Activated CD4-positive, alpha-beta memory T cell treated with anti-CD3 and anti-CD28 coated beads for 36 hours (primary cell): ENCODE measurements at regions of chr3 and their contacts with region 1.

Region 1: DNA sequence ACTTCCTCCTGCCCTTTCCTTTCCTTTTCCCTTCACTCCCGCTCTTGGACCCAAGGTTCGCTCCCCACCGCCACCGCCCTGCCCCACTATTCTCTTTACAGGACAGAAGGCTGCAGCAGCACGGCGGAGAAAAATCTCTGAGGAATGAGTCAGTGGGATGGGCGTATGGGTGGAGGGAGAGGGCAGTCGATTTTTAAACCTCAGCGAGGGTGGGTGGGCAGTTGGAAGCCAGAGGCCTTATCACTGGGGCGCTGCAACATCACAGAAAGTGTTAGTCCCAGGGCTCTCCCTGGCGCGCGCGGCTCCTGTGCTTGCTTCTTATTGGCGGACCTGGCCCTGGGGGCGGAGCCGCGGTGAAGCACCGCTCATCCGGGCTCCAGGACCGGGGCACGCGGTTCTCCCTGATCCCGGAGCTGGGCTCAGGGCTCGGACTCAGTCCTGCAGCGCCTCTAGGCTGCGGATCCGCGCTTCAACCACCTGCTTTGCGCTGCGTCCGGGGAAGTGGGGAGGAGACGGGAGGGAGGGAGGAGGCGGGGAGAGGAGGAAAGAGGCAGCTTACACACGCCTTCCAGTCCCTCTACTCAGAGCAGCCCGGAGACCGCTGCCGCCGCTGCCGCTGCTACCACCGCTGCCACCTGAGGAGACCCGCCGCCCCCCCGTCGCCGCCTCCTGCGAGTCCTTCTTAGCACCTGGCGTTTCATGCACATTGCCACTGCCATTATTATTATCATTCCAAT is at the start of gene ALCAM:
- DNase-seq: peak; percentile 91
- H3K4me3 Mint-ChIP-seq: peak within 1 kb of the TSS; percentile 84
- H3K27ac Mint-ChIP-seq: peak within 1 kb of the TSS; percentile 97
- H3K4me1 Mint-ChIP-seq: peaks cover 28% of the 10 kb centered on the region
- H3K27me3 Mint-ChIP-seq: peaks cover 24% of the 10 kb centered on the region
- total RNA-seq, gene ALCAM: 20.3 to 20.6 TPM

Region 2: DNA sequence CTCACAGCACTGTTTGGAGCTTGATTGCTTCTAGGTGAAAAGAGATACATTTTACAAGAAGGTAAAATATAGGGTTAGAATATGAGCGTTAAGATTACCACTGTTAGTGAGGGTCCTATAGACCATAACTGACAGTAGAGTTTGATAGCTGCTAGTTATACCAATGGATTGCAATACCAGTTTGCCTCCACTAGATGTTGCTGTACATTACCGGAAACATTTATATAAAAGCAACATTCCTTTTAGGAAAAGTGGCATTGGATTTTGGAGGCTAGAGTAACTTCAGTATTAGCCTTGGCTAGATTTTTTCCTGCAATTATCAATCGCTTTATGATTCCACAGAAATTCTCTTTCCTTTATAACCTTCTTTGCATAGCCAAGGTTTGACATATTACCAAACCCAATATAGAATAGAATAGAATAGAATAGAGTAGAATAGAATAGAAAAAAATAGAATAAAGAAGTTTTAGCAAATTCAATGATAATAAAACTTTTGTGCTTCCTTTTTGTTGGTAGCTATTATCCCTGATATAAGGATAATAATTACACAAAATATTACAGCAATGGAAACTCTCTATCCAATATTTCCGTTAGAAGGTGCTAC is 1093.3 kb before region 1 on chr3:
- CTCF ChIA-PET with region 1: no interaction called
- POLR2A ChIA-PET with region 1: no interaction called
- intact Hi-C with region 1: loop called (anchors 10 kb)
- DNase-seq: no peak
- H3K4me3 Mint-ChIP-seq: no peak overlapping the region
- H3K27ac Mint-ChIP-seq: no peak overlapping the region
- H3K4me1 Mint-ChIP-seq: no peaks in the 10 kb centered on the region
- H3K27me3 Mint-ChIP-seq: no peaks in the 10 kb centered on the region

Region 3: DNA sequence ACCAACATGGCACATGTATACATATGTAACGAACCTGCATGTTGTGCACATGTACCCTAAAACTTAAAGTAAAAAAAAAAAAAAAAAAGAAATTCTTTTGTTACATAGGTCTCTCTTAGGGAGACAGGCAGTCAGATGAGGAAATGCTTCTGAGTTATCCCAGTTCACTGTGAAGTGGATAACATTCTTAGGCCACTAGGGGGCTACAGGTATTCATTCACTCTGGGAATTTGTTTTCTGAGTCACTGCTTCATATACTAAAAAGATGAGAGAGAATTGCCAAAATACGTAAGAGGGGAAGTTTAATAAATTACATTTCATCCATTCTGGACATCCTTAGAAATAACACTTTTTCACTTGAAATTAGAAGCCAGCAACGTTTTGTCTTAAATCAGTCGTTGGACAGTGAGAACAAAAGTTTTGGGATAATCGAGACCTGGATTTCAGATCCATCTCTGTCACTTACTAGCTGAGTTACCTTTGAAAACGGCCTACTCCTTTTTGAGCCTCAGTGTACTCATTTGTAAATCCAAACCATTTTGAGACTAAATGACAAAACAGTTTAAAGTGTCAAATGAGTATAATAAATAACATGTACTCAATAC is 738.2 kb before region 1 on chr3:
- CTCF ChIA-PET with region 1: no interaction called
- POLR2A ChIA-PET with region 1: no interaction called
- intact Hi-C with region 1: loop called (anchors 1 kb)
- DNase-seq: no peak
- H3K4me3 Mint-ChIP-seq: no peak overlapping the region
- H3K27ac Mint-ChIP-seq: no peak overlapping the region
- H3K4me1 Mint-ChIP-seq: no peaks in the 10 kb centered on the region
- H3K27me3 Mint-ChIP-seq: no peaks in the 10 kb centered on the region

Region 4: DNA sequence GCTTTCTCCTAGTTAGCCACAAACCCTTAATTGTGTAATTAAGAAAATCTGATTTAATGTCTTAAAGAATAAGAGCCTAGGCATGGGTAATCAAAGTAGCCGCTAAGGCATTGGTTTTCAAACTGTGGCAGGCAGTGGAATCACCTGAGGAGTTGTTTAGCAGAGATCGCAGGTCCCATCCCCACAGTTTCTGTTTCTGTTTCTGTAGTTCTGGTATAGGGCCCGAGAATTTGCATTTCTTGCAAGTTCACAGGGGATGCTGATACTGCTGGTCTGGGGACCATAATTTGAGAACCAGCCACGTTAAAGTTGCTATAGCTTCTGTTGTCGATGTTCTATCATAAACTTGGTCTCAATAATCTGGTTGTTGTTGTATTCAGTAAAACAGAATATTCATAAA is 204.5 kb after region 1 on chr3:
- CTCF ChIA-PET with region 1: no interaction called
- POLR2A ChIA-PET with region 1: no interaction called
- intact Hi-C with region 1: no loop called
- DNase-seq: no peak
- H3K4me3 Mint-ChIP-seq: no peak overlapping the region
- H3K27ac Mint-ChIP-seq: no peak overlapping the region
- H3K4me1 Mint-ChIP-seq: no peaks in the 10 kb centered on the region
- H3K27me3 Mint-ChIP-seq: no peaks in the 10 kb centered on the region

Region 5: GRCh38 chr3:105752744-105753415 is 386.4 kb after region 1 on chr3:
- CTCF ChIA-PET with region 1: no interaction called
- POLR2A ChIA-PET with region 1: no interaction called
- intact Hi-C with region 1: loop called (anchors 1 kb)
- DNase-seq: peak; percentile 41
- H3K4me3 Mint-ChIP-seq: peak overlapping the region; percentile 21
- H3K27ac Mint-ChIP-seq: peak overlapping the region; percentile 87
- H3K4me1 Mint-ChIP-seq: peaks cover 75% of the 10 kb centered on the region
- H3K27me3 Mint-ChIP-seq: no peaks in the 10 kb centered on the region

Region 6: DNA sequence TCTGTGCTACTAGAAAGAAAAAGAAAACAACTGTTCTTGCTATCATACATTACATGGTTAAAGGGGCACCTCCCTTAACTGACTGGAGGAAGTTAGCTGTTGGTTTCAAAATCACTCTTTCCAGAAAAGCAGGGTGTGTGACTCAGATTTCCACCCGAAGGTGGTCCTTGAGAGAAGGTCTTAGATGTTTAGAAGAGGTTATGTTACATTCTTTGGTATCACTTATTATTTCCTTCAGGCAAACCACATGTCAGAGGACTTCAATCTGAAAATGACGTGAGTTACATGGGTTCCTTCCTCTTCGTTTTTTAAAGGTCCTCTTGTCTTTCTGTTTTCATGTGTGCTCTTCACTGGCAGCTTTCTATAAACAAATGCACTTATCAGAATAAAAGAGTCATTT is 810.2 kb after region 1 on chr3:
- CTCF ChIA-PET with region 1: no interaction called
- POLR2A ChIA-PET with region 1: no interaction called
- intact Hi-C with region 1: loop called (anchors 2 kb)
- DNase-seq: peak; percentile 76
- H3K4me3 Mint-ChIP-seq: peak overlapping the region; percentile 51
- H3K27ac Mint-ChIP-seq: peak overlapping the region; percentile 87
- H3K4me1 Mint-ChIP-seq: peaks cover 58% of the 10 kb centered on the region
- H3K27me3 Mint-ChIP-seq: no peaks in the 10 kb centered on the region

Region 7: GRCh38 chr3:106333911-106334618 is 967.6 kb after region 1 on chr3:
- CTCF ChIA-PET with region 1: no interaction called
- POLR2A ChIA-PET with region 1: no interaction called
- intact Hi-C with region 1: loop called (anchors 1 kb)
- DNase-seq: peak; percentile 81
- H3K4me3 Mint-ChIP-seq: peak overlapping the region; percentile 49
- H3K27ac Mint-ChIP-seq: peak overlapping the region; percentile 87
- H3K4me1 Mint-ChIP-seq: peaks cover 80% of the 10 kb centered on the region
- H3K27me3 Mint-ChIP-seq: no peaks in the 10 kb centered on the region

Region 8: DNA sequence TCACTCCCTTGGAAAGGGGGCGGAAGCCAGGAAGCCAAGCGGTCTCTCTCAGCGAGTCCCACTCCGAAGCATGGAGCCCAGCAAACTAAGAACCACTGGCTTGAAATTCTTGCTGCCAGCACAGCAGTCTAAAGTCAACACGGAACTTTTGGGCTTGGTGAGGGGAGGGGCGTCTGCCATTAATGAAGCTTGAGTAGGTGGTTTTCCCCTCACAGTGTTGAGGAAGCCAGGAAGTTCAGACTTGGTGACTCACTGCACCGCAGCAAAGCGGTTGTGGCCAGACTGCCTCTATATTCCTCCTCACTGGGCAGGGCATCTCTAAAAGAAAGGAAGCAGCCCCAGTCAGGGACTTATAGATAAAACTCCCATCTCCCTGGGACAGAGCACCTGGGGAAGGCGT is 1167.7 kb after region 1 on chr3:
- CTCF ChIA-PET with region 1: no interaction called
- POLR2A ChIA-PET with region 1: no interaction called
- intact Hi-C with region 1: loop called (anchors 5 kb)
- DNase-seq: peak; percentile 81
- H3K4me3 Mint-ChIP-seq: peak overlapping the region; percentile 7
- H3K27ac Mint-ChIP-seq: peak overlapping the region; percentile 80
- H3K4me1 Mint-ChIP-seq: peaks cover 27% of the 10 kb centered on the region
- H3K27me3 Mint-ChIP-seq: no peaks in the 10 kb centered on the region